Posterior cingulate gyrus (tissue), 11 donors: ENCODE measurements at regions of chr14 and their contacts with region 1.

Region 1: GRCh38 chr14:49892636-49893308 is at the start of gene ARF6:
- DNase-seq: peak; percentile 96 to 99 (median 98)

Region 2: GRCh38 chr14:49808780-49809179 is 84.0 kb before region 1 on chr14:
- intact Hi-C with region 1: no loop called
- DNase-seq: no peak

Region 3: GRCh38 chr14:49820176-49820575 is 72.6 kb before region 1 on chr14:
- intact Hi-C with region 1: no loop called
- DNase-seq: no peak

Region 4: GRCh38 chr14:49971156-49972130 is 78.7 kb after region 1 on chr14:
- intact Hi-C with region 1: no loop called
- DNase-seq: no peak

Region 5: GRCh38 chr14:50116181-50116956 is 223.6 kb after region 1 on chr14 and contains the start of gene VCPKMT:
- intact Hi-C with region 1: loop called (anchors 2 kb)
- DNase-seq: peak; percentile 84 to 99 (median 90)